ENCODE measurements at regions of chr5 and their contacts with region 1.

Region 1: GRCh38 chr5:151051066-151051930 is 29.5 kb downstream of the TNIP1 start:
- DNase-seq: peak; percentile 86
- H3K4me3 ChIP-seq: no peak overlapping the region; a peak in 1 of 4 replicates
- H3K27ac ChIP-seq: no peak overlapping the region
- H3K4me1 ChIP-seq: no peaks in the 10 kb centered on the region
- H3K27me3 ChIP-seq: no peaks in the 10 kb centered on the region
- CTCF ChIP-seq: peak; percentile 92
- EP300 ChIP-seq: no peak
- RAD21 ChIP-seq: peak; percentile 93

Region 2: GRCh38 chr5:150946351-150946905 is 104.9 kb before region 1 on chr5:
- CTCF ChIA-PET with region 1: no interaction called
- POLR2A ChIA-PET with region 1: no interaction called
- DNase-seq: peak; percentile 62
- H3K4me3 ChIP-seq: peak overlapping the region in 1 of 2 experiments; percentile 34; a peak in 2 of 4 replicates
- H3K27ac ChIP-seq: no peak overlapping the region; a peak in 1 of 4 replicates
- H3K4me1 ChIP-seq: no peaks in the 10 kb centered on the region
- H3K27me3 ChIP-seq: no peaks in the 10 kb centered on the region
- CTCF ChIP-seq: no peak
- EP300 ChIP-seq: no peak
- RAD21 ChIP-seq: no peak

Region 3: DNA sequence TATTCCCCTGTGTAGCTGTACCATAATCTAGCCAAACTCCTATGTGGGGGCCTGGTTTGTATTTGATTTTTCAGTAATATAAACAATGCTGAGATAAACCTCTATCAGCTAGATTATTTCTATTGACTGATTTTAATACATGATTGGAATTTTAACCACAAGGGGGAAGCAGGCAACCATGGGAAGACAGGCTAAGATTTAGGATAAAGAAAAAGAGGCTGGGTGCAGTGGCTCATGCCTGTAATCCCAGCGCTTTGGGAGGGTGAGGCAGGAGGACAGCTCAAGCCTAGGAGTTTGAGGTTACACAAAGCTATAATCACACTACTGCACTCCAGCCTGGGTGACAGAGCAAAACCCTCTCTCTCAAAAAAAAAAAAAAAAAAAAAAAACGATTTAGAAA is 49.0 kb before region 1 on chr5:
- CTCF ChIA-PET with region 1: interaction called, 10 read pairs
- POLR2A ChIA-PET with region 1: no interaction called
- DNase-seq: peak; percentile 41
- H3K4me3 ChIP-seq: no peak overlapping the region
- H3K27ac ChIP-seq: no peak overlapping the region
- H3K4me1 ChIP-seq: no peaks in the 10 kb centered on the region; a peak in 1 of 4 replicates
- H3K27me3 ChIP-seq: no peaks in the 10 kb centered on the region
- CTCF ChIP-seq: peak; percentile 60
- EP300 ChIP-seq: no peak
- RAD21 ChIP-seq: peak; percentile 76

Region 4: DNA sequence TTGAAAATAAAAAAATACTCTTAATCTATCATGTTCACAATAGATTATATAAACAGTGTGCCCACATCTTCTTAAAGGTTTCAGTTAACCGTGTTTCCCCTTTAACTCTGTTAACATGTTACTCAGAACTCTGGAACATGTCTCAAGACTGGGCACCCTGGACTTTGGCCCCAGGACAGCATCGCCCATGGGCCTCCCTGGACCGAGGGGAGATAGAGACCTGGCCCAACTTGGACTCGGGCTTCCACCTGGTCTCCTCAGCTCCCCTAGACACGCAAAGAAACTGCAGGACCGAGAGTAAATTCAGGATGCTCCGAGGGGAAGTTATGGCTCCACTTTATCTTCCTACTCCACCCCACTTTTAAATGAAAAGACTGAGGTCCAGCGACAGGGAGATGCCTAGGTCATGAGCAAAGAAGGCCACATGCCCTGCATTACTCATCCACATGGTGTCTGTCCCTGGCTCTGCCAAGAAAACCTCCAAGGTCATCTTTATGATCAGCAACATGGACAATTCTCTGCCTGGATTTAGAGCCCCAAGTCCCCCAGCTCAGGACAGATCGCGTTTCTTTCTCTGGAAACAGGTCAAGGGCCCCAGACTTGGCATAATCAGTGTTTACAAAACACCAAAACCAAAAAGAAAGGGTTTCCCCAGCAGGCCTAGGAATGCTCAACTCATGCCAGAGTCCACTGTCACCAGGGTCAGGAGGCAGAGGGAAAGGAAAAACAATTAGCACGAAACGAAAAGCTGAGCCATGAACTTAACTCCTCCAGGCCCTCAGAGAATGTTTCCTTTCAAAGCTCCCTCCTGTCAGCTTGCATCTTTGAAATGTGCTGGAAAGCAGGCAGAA is 13.5 kb before region 1 on chr5:
- CTCF ChIA-PET with region 1: interaction called, 93 read pairs
- POLR2A ChIA-PET with region 1: no interaction called
- DNase-seq: no peak
- H3K4me3 ChIP-seq: no peak overlapping the region
- H3K27ac ChIP-seq: peak overlapping the region in 1 of 2 experiments; percentile 69; a peak in 3 of 4 replicates
- H3K4me1 ChIP-seq: peaks cover 0 to 26% of the 10 kb centered on the region in 2 experiments; a peak in 2 of 4 replicates
- H3K27me3 ChIP-seq: no peaks in the 10 kb centered on the region
- CTCF ChIP-seq: no peak
- EP300 ChIP-seq: no peak
- RAD21 ChIP-seq: no peak

Region 5: GRCh38 chr5:151080623-151081430 is 29.5 kb after region 1 on chr5 and contains the start of gene TNIP1:
- CTCF ChIA-PET with region 1: interaction called, 22 read pairs
- POLR2A ChIA-PET with region 1: no interaction called
- DNase-seq: peak; percentile 98
- H3K4me3 ChIP-seq: peak within 1 kb of the TSS; percentile 80 to 85
- H3K27ac ChIP-seq: peak within 1 kb of the TSS; percentile 89 to 97
- H3K4me1 ChIP-seq: peaks cover 4 to 19% of the 10 kb centered on the region in 2 experiments; a peak in 3 of 4 replicates
- H3K27me3 ChIP-seq: no peaks in the 10 kb centered on the region
- CTCF ChIP-seq: no peak
- EP300 ChIP-seq: no peak
- RAD21 ChIP-seq: no peak
- polyA plus RNA-seq, gene TNIP1: 39.4 and 46.2 TPM in 2 replicates

Region 6: DNA sequence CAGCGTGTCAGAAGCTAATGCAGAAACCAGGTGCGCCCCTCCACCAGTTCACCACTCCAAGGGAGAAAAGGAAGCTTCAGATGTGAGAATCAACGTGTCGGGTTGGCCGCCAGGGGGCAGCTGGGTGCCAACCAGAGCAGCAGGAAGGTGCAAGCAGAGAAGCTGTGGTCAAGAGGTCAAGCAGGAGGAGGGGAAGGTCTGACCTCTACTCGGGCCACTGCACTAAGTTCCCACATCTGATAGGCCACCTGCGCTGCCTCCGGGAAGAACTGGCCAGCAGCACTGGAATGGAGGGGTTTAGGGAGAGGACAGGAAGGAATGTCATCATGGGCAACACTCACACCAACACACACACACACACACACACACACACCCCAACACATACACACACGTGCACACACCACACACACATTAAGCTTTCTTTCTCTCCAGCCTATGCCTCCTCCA is 74.9 kb after region 1 on chr5:
- CTCF ChIA-PET with region 1: interaction called, 79 read pairs
- POLR2A ChIA-PET with region 1: no interaction called
- DNase-seq: peak; percentile 75
- H3K4me3 ChIP-seq: peak overlapping the region in 1 of 2 experiments; percentile 32; a peak in 1 of 4 replicates
- H3K27ac ChIP-seq: no peak overlapping the region
- H3K4me1 ChIP-seq: no peaks in the 10 kb centered on the region; a peak in 1 of 4 replicates
- H3K27me3 ChIP-seq: no peaks in the 10 kb centered on the region
- CTCF ChIP-seq: peak; percentile 81
- EP300 ChIP-seq: no peak
- RAD21 ChIP-seq: peak; percentile 79

Region 7: GRCh38 chr5:151183451-151184245 is 132.3 kb after region 1 on chr5:
- CTCF ChIA-PET with region 1: interaction called, 10 read pairs
- POLR2A ChIA-PET with region 1: no interaction called
- DNase-seq: no peak
- H3K4me3 ChIP-seq: no peak overlapping the region
- H3K27ac ChIP-seq: no peak overlapping the region
- H3K4me1 ChIP-seq: no peaks in the 10 kb centered on the region; a peak in 1 of 4 replicates
- H3K27me3 ChIP-seq: no peaks in the 10 kb centered on the region
- CTCF ChIP-seq: no peak
- EP300 ChIP-seq: no peak
- RAD21 ChIP-seq: no peak

Measured in SK-N-SH (cell line).